Dendritic cell treated with granulocyte-macrophage colony-stimulating factor and Interleukin-4, amounts not matched to agents 40 ng/mL and 50 ng/mL, for 4 days (primary cell): ENCODE measurements at regions of chr2 and their contacts with region 1.

Region 1: DNA sequence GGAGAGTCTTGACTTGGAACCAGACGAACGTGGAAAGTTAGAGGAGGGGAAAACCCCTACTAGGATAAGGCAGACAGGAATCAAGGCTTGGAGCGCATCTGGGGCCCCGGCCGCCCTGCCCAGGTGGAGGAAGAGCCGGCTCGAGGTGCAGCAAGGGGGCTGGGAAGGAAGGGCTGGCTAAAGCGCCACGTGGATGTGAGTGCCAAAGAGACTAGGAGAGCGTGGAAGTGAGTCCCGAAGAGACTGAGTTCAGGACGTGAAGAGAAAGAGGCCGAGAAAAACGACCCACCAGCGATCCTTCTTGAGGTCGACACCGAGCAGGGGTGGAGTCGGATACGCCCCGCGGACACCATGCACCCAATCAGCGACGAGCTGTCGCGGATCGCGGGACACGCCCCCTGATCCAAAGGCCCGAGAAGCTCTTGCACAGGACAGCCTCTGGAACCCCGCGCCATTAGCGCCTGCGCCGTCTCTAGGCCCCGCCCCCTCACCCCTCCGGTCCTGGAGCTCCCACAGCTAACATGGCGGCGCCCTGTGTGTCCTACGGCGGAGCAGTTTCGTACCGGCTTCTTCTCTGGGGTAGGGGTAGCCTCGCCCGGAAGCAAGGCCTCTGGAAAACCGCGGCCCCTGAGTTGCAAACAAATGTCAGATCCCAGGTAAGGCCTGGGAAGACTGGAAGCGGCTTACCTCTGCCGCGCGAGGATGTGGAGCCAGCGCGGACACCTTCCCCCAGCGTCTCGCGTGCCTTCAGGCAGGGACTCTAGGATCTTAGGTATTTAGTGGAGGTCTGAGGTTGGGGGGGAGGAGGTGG is at the start of gene MRPS9:
- H3K4me3 Mint-ChIP-seq: peak within 1 kb of the TSS; percentile 93
- H3K27ac Mint-ChIP-seq: peak within 1 kb of the TSS; percentile 83
- H3K4me1 Mint-ChIP-seq: peaks cover 22% of the 10 kb centered on the region
- H3K27me3 Mint-ChIP-seq: peaks cover 3% of the 10 kb centered on the region

Region 2: GRCh38 chr2:104862058-104862941 is 175.5 kb before region 1 on chr2:
- intact Hi-C with region 1: loop called (anchors 5 kb)
- H3K4me3 Mint-ChIP-seq: peak overlapping the region; percentile 22
- H3K27ac Mint-ChIP-seq: no peak overlapping the region
- H3K4me1 Mint-ChIP-seq: peaks cover 35% of the 10 kb centered on the region
- H3K27me3 Mint-ChIP-seq: peaks cover 88% of the 10 kb centered on the region

Region 3: DNA sequence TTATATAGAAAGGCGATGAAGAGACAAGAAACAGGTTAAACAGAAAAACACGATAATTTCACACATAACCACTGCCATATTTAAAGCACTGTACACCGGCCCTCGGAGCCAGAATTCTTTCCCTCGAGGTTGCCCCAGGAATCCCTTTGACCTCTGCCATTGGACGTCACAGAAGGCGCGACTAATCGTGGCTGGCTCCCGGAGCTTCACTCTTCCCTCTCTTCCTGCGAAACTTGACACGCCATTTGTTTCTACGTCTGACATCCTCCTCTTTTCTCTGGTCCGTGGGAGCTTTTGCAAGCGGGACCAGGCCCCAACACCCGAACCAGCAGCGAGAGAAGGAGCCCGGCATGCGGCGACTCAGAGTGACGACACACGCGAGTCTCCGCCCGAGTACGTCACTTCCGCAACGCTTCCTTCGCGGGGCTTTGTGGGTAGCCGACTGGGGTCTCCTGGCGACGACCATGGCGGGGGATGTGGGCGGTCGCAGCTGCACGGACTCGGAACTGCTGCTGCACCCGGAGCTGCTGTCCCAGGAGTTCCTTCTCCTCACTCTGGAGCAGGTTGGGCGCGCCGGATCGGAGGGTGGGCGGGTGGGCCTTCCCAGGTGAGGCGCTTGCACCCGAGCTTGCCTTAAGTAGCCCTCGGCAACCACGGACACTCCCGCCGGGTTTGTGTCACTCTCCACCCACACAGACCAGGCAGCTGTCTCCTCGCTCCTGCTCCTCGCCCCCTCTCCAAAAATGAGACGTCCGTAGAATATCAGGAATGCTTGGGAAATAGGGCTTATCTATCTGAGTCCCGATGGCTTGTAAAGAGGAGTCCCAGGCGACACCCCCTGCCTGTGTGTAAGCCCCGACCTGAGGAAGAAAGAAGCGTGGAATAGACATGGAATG is 299.6 kb after region 1 on chr2 and contains the start of gene C2orf49:
- intact Hi-C with region 1: loop called (anchors 10 kb)
- H3K4me3 Mint-ChIP-seq: peak within 1 kb of the TSS; percentile 96
- H3K27ac Mint-ChIP-seq: peak within 1 kb of the TSS; percentile 97
- H3K4me1 Mint-ChIP-seq: peaks cover 21% of the 10 kb centered on the region
- H3K27me3 Mint-ChIP-seq: no peaks in the 10 kb centered on the region